PC-3 (cell line): ENCODE measurements at regions of chr5 and their contacts with region 1.

Region 1: GRCh38 chr5:51382763-51383490 is at the start of gene ISL1:
- DNase-seq: peak; percentile 87
- ATAC-seq: peak; percentile 71
- H3K4me3 ChIP-seq: peak within 1 kb of the TSS; percentile 86
- H3K27ac ChIP-seq: peak within 1 kb of the TSS; percentile 36
- H3K4me1 ChIP-seq: peaks cover 26% of the 10 kb centered on the region
- H3K27me3 ChIP-seq: no peaks in the 10 kb centered on the region
- CTCF ChIP-seq: no peak
- total RNA-seq, gene ISL1: 1.4 and 1.5 TPM in 2 replicates

Region 2: DNA sequence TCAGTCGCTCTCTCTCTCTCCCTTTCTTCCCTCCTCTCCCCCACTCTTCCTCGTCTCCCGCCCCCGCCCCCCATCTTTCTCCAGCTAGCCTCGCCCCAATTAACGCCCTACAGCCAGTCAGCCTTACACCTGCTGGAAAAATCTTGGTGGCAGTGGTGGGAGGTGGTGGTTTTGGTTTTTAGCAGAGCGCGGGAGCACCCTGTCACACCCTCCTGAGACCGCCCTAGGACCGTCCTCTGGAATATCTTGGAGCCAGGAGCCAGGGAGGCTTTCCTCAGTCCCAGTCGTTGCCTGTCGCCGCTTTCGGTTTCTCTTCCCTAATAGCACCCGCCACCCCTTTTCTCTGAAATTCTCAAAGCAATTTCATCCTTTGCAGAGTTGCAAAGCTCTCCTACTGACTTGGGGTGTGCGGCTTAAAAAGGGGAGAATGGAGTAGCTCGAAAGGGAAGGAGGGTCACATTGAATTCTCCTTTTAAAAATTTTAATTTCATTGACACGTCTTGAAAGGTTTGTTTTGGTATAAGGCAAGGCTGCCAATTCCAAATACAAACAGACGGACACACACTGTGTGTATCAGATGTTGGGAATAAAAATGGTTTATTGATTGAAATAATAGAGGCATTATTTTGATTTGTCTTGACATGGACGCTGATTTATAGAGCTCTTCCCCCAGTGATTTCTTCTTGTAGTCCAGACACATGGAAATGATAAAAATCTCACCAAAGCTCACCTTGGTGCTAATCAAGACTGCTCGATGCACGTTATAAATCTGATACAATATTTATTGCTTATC is 415.2 kb before region 1 on chr5:
- CTCF ChIA-PET with region 1: no interaction called
- POLR2A ChIA-PET with region 1: no interaction called
- intact Hi-C with region 1: no loop called
- DNase-seq: no peak
- ATAC-seq: no peak
- H3K4me3 ChIP-seq: no peak overlapping the region
- H3K27ac ChIP-seq: no peak overlapping the region
- H3K4me1 ChIP-seq: no peaks in the 10 kb centered on the region
- H3K27me3 ChIP-seq: peaks cover 7% of the 10 kb centered on the region
- CTCF ChIP-seq: no peak

Region 3: GRCh38 chr5:51172903-51173626 is 209.9 kb before region 1 on chr5:
- CTCF ChIA-PET with region 1: no interaction called
- POLR2A ChIA-PET with region 1: no interaction called
- intact Hi-C with region 1: no loop called
- DNase-seq: no peak
- ATAC-seq: no peak
- H3K4me3 ChIP-seq: no peak overlapping the region
- H3K27ac ChIP-seq: no peak overlapping the region
- H3K4me1 ChIP-seq: no peaks in the 10 kb centered on the region
- H3K27me3 ChIP-seq: no peaks in the 10 kb centered on the region
- CTCF ChIP-seq: no peak

Region 4: DNA sequence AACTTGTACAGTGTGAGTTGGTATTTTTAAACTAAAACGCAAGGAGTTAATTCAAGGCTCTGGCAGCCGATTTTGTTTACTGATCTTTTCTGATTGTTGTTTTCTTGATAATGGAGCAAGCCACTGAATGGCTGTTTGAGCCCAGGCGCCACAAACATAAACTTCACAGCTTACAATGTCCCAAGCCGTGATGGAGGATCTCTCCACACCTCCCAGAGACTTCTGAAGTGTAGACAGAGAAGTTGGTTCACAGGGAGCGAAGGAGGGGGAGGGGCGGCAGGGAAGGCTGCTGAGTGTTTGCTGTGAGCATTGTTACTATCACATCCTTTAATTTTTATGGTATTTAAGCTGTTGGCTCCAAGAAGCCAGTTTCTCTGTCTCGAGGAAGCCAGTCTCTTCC is 15.1 kb after region 1 on chr5:
- CTCF ChIA-PET with region 1: interaction called, 4 read pairs
- POLR2A ChIA-PET with region 1: interaction called, 5 read pairs
- intact Hi-C with region 1: loop called (anchors 1 kb)
- DNase-seq: no peak
- ATAC-seq: no peak
- H3K4me3 ChIP-seq: peak overlapping the region; percentile 30; the same call in 1 of the 2 replicates
- H3K27ac ChIP-seq: no peak overlapping the region
- H3K4me1 ChIP-seq: peaks cover 20% of the 10 kb centered on the region
- H3K27me3 ChIP-seq: no peaks in the 10 kb centered on the region
- CTCF ChIP-seq: no peak

Region 5: GRCh38 chr5:51433052-51433710 is 50.3 kb after region 1 on chr5:
- CTCF ChIA-PET with region 1: interaction called, 8 read pairs
- POLR2A ChIA-PET with region 1: no interaction called
- intact Hi-C with region 1: loop called (anchors 2 kb)
- DNase-seq: peak; percentile 65
- ATAC-seq: peak; percentile 90
- H3K4me3 ChIP-seq: no peak overlapping the region
- H3K27ac ChIP-seq: peak overlapping the region; percentile 62
- H3K4me1 ChIP-seq: peaks cover 14% of the 10 kb centered on the region
- H3K27me3 ChIP-seq: no peaks in the 10 kb centered on the region
- CTCF ChIP-seq: no peak

Region 6: GRCh38 chr5:51684794-51685355 is 301.9 kb after region 1 on chr5:
- CTCF ChIA-PET with region 1: interaction called, 7 read pairs
- POLR2A ChIA-PET with region 1: no interaction called
- intact Hi-C with region 1: loop called (anchors 2 kb)
- DNase-seq: peak; percentile 9
- ATAC-seq: no peak
- H3K4me3 ChIP-seq: no peak overlapping the region
- H3K27ac ChIP-seq: no peak overlapping the region
- H3K4me1 ChIP-seq: no peaks in the 10 kb centered on the region; the same call in 1 of the 2 replicates
- H3K27me3 ChIP-seq: no peaks in the 10 kb centered on the region
- CTCF ChIP-seq: peak; percentile 57

Region 7: GRCh38 chr5:51846015-51846414 is 463.1 kb after region 1 on chr5:
- CTCF ChIA-PET with region 1: interaction called, 5 read pairs
- POLR2A ChIA-PET with region 1: no interaction called
- intact Hi-C with region 1: loop called (anchors 10 kb)
- DNase-seq: peak; percentile 37
- ATAC-seq: no peak
- H3K4me3 ChIP-seq: no peak overlapping the region
- H3K27ac ChIP-seq: no peak overlapping the region
- H3K4me1 ChIP-seq: no peaks in the 10 kb centered on the region
- H3K27me3 ChIP-seq: no peaks in the 10 kb centered on the region
- CTCF ChIP-seq: no peak

Region 8: GRCh38 chr5:51960617-51961115 is 577.7 kb after region 1 on chr5:
- CTCF ChIA-PET with region 1: no interaction called
- POLR2A ChIA-PET with region 1: no interaction called
- intact Hi-C with region 1: loop called (anchors 1 kb)
- DNase-seq: peak; percentile 60
- ATAC-seq: peak; percentile 87
- H3K4me3 ChIP-seq: no peak overlapping the region
- H3K27ac ChIP-seq: no peak overlapping the region
- H3K4me1 ChIP-seq: peaks cover 7% of the 10 kb centered on the region
- H3K27me3 ChIP-seq: no peaks in the 10 kb centered on the region
- CTCF ChIP-seq: peak; percentile 78